Adrenal gland (tissue), 19 donors: ENCODE measurements at regions of chr17 and their contacts with region 1.

Region 1: GRCh38 chr17:27245230-27245696 is 48.7 kb upstream of the WSB1 start:
- DNase-seq: peak; percentile 77 to 90 (median 83)
- H3K4me3 ChIP-seq: no peak overlapping the region
- H3K27ac ChIP-seq: peak overlapping the region; percentile 71 to 94 (median 86)
- H3K4me1 ChIP-seq: peaks cover 23 to 50% of the 10 kb centered on the region in 2 donors
- H3K27me3 ChIP-seq: no peaks in the 10 kb centered on the region
- CTCF ChIP-seq: peak; percentile 26 to 77 (median 64)
- POLR2A ChIP-seq: peak in 1 of 2 donors; percentile 16

Region 2: DNA sequence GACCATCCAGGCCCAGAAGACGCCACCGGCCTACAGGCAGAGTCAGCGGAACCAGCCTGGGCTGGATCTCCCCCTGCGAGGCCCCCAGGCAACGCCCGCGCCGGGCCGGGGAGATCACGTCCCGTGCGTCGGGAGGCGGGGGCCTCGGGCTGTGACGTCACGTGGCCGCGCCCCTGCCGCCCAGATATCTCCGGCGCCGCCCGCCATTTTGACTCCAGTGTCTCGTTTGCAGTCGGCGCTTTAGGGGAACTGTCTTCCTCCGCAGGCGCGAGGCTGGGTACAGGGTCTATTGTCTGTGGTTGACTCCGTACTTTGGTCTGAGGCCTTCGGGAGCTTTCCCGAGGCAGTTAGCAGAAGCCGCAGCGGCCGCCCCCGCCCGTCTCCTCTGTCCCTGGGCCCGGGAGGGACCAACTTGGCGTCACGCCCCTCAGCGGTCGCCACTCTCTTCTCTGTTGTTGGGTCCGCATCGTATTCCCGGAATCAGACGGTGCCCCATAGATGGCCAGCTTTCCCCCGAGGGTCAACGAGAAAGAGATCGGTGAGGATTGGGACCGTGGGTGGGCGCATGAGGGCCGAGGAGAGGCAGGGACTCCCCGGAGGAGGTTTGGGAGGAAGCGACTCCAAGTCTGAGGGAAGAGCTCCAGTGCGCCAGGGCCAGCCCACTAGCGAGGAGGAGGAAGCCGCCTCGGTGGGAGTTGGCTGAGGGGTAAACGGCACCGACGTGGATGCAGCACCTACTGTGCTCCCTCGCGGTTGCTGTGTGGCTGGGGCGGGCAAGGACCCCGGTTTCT is 48.8 kb after region 1 on chr17 and contains the start of gene WSB1:
- intact Hi-C with region 1: loop called in 1 of 2 experiments (anchors 5 kb)
- DNase-seq: peak; percentile 91 to 97 (median 94)
- H3K4me3 ChIP-seq: peak within 1 kb of the TSS; percentile 84 to 99 (median 92)
- H3K27ac ChIP-seq: peak within 1 kb of the TSS; percentile 98 to 100 (median 100)
- H3K4me1 ChIP-seq: peaks cover 9 to 39% of the 10 kb centered on the region in 2 donors
- H3K27me3 ChIP-seq: no peaks in the 10 kb centered on the region
- CTCF ChIP-seq: peak in 4 of 6 experiments; percentile 6 to 9 (median 7)
- POLR2A ChIP-seq: peak; percentile 96 to 99
- total RNA-seq, gene WSB1: 27.5 to 170 (median 113) TPM